Caco-2 (cell line): ENCODE measurements at regions of chr2 and their contacts with region 1.

Region 1: GRCh38 chr2:232339121-232340081 is 39.1 kb upstream of the ALPP start:
- DNase-seq: no peak
- H3K4me3 ChIP-seq: no peak overlapping the region
- H3K4me3 Mint-ChIP-seq: no peak overlapping the region
- H3K27ac Mint-ChIP-seq: no peak overlapping the region
- H3K4me1 ChIP-seq: no peaks in the 10 kb centered on the region
- H3K4me1 Mint-ChIP-seq: no peaks in the 10 kb centered on the region
- H3K27me3 ChIP-seq: no peaks in the 10 kb centered on the region
- H3K27me3 Mint-ChIP-seq: no peaks in the 10 kb centered on the region
- CTCF ChIP-seq: no peak

Region 2: GRCh38 chr2:232286001-232286868 is 53.2 kb before region 1 on chr2:
- CTCF ChIA-PET with region 1: no interaction called
- POLR2A ChIA-PET with region 1: no interaction called
- intact Hi-C with region 1: no loop called
- DNase-seq: no peak
- H3K4me3 ChIP-seq: no peak overlapping the region
- H3K4me3 Mint-ChIP-seq: no peak overlapping the region
- H3K27ac Mint-ChIP-seq: no peak overlapping the region
- H3K4me1 ChIP-seq: no peaks in the 10 kb centered on the region
- H3K4me1 Mint-ChIP-seq: no peaks in the 10 kb centered on the region
- H3K27me3 ChIP-seq: no peaks in the 10 kb centered on the region
- H3K27me3 Mint-ChIP-seq: no peaks in the 10 kb centered on the region
- CTCF ChIP-seq: no peak

Region 3: DNA sequence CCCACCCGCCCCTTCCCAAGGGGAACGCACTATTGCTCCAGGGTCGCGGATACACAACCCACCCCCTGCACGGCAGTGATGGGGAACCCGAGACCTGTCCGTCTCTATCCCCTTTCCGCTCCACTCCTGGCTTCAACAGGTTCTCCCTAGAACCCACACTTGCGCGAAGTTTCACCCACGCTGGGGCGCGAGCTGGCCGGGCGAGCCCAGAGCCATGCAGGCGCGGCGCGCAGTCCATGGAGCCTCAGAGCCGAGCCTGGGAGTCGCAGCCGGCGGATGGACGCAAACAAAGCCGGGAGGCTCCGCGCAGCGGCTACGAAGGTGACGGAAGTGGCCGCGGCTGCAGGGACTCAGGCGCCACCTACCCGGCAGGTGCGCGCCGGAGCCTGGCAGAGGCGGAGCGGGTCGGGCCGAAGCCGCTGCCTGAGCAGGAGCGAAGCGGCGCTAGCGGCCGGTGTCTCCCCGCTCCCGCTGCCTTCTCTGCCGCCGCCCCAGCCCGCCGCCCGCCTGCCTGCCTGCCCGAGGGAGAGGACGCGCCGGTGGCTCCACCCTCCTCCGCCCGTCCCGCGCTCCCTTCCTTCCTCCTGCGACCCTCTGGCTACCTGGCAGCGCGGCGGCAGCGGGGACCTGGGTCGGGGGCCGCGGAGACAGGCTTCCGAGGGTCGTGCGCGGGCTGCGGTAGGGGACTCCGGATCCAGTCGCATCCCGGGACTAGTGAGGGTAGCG is 81.2 kb after region 1 on chr2:
- CTCF ChIA-PET with region 1: no interaction called
- POLR2A ChIA-PET with region 1: no interaction called
- intact Hi-C with region 1: no loop called
- DNase-seq: peak; percentile 50 to 64
- H3K4me3 ChIP-seq: peak overlapping the region; percentile 20
- H3K4me3 Mint-ChIP-seq: peak overlapping the region; percentile 66
- H3K27ac Mint-ChIP-seq: no peak overlapping the region
- H3K4me1 ChIP-seq: no peaks in the 10 kb centered on the region
- H3K4me1 Mint-ChIP-seq: no peaks in the 10 kb centered on the region
- H3K27me3 ChIP-seq: no peaks in the 10 kb centered on the region
- H3K27me3 Mint-ChIP-seq: no peaks in the 10 kb centered on the region
- CTCF ChIP-seq: no peak

Region 4: DNA sequence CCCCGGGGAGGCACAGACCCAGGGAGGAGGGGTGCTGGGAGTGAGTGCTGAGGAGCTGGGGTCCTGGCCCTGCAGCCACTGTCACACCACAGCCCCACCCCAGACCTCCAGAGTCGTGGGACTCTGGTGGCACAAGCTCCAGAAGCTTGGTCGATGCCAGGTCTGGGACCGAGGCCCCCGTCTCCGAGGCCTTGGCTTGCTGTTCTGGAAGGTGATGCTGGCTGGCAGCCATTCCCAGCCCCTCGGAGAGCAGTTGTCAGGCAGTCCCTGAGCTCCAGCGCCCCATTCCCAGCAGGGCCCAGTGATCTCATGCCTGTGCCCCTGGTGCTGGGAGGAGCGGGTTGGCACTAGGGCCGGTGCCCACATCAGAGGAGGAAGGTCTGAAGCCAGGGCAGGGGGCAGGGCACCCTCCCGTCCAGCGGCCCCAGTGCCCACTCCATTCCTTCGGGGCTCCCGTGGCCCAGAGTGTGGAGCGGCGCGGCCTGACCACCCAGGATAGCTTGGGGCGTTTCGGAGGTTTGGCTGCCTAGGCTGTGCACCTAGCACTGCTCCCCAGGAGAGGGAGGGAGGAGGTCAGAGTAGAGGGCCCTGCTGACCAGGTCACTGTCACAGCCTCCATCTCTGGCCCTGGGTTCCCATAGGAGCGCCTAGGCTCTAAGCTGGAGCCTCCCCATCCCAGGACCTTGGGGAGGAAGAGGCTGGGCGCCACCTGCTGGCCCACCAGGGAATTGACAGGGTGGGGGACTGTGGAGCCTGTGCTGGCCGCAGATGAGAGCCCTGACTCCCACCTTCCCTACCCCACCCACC is 99.8 kb after region 1 on chr2:
- CTCF ChIA-PET with region 1: interaction called, 4 read pairs
- POLR2A ChIA-PET with region 1: no interaction called
- intact Hi-C with region 1: loop called (anchors 5 kb)
- DNase-seq: peak; percentile 48 to 63
- H3K4me3 ChIP-seq: no peak overlapping the region
- H3K4me3 Mint-ChIP-seq: no peak overlapping the region
- H3K27ac Mint-ChIP-seq: no peak overlapping the region
- H3K4me1 ChIP-seq: 0 out of 2 replicates have a peak, but pooled peaks cover 3% of the 10 kb centered on the region
- H3K4me1 Mint-ChIP-seq: no peaks in the 10 kb centered on the region
- H3K27me3 ChIP-seq: no peaks in the 10 kb centered on the region
- H3K27me3 Mint-ChIP-seq: no peaks in the 10 kb centered on the region
- CTCF ChIP-seq: peak; percentile 1 to 26